ENCODE measurements at regions of chr17 and their contacts with region 1.

Region 1: DNA sequence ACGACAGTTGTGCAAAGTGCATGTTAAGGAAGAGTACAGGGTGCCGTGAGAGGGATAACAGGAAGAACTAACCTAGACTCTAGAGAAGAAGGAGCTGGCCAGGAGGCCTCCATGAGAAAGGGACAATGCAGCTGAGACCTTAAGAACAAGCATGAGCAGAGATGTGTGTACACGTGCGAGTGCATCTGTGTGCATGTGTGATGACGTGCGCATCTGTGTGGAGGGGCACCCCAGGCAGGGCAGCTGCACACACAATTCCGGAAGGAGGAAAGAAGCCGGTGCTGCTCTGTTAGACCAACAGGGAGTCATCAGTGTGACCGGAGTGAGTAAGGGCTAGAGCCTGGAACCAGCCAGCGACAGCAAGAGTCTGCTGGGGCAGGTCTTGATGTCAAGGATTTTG is 7.6 kb upstream of the KIF19 start:
- DNase-seq: no peak
- H3K4me3 ChIP-seq: no peak overlapping the region
- CTCF ChIP-seq: no peak
- POLR2A ChIP-seq: no peak

Region 2: GRCh38 chr17:74176546-74177001 is 141.8 kb before region 1 on chr17:
- intact Hi-C with region 1: no loop called
- DNase-seq: peak in 1 of 2 donors; percentile 91
- H3K4me3 ChIP-seq: no peak overlapping the region
- CTCF ChIP-seq: peak in 1 of 3 donors; percentile 44
- POLR2A ChIP-seq: no peak

Region 3: GRCh38 chr17:74277935-74278334 is 40.5 kb before region 1 on chr17:
- intact Hi-C with region 1: loop called (anchors 2 kb)
- DNase-seq: no peak
- H3K4me3 ChIP-seq: no peak overlapping the region
- CTCF ChIP-seq: no peak
- POLR2A ChIP-seq: no peak

Measured in lower leg skin (tissue), 4 donors.